HEK293 (cell line): ENCODE measurements at regions of chr6 and their contacts with region 1.

Region 1: GRCh38 chr6:150600301-150601017 is 774 bp downstream of the PLEKHG1 start:
- H3K4me3 ChIP-seq: peak overlapping the region; percentile 72
- H3K27ac ChIP-seq: peak overlapping the region; percentile 90
- H3K4me1 ChIP-seq: peaks cover 7% of the 10 kb centered on the region
- CTCF ChIP-seq: peak; percentile 65

Region 2: DNA sequence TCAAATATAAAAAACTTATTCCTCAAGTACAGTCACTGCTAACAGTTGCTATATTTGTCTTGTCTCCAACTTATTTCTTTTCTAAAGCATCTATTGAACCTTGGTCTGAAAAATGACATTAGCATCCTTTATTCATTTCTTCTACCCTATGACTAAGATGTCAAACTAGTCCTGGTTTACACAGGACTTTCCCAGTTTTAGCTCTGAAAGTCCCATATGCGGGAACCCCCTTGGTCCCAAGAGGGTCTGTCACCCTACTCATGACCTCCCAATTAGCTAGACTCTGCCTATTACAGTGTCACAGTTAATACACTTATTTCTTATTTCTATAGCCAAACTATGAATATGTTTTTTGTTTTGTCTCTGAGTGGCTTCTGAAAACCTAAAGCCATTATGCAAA is 36.3 kb after region 1 on chr6:
- CTCF ChIA-PET with region 1: interaction called, 11 read pairs
- POLR2A ChIA-PET with region 1: interaction called, 4 read pairs
- H3K4me3 ChIP-seq: no peak overlapping the region
- H3K27ac ChIP-seq: no peak overlapping the region
- H3K4me1 ChIP-seq: peaks cover 51% of the 10 kb centered on the region
- CTCF ChIP-seq: no peak

Region 3: DNA sequence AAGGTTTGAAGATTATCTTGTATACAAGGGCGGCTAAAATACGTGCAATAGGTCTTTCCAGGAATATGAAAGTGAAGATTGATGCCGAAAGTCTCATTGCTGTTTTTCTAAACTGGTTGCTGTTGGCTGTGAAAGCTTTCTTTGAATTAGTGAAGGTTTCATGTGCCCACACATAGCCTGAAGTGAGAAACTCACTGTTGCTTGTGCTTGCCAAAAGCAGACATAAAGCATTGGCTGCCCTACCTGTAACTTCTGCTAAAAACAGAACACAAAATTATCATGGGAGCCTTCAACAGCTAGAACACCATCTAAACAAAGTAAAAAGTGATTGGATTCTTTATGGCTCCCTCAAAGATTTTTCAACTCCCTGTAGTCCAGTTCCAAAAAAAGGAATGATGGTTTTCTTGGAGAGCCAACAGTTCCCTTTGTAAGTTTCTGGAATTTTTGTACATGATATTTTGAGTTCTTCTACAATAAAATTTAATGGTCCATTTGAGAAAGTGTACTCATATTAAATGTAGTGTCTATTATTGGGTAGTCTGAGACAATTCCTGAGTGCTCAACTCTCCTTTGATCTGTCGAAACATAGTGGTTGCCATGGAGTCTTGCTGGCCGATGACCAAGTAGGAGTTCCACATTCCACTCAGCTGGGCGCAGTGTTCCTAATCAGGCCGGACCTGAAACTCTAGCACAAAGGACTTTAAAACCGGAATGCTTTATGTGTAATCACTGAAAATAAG is 67.7 kb after region 1 on chr6:
- CTCF ChIA-PET with region 1: interaction called, 10 read pairs
- POLR2A ChIA-PET with region 1: interaction called, 3 read pairs
- H3K4me3 ChIP-seq: no peak overlapping the region
- H3K27ac ChIP-seq: peak overlapping the region; percentile 20; the same call in 1 of the 2 replicates
- H3K4me1 ChIP-seq: peaks cover 23% of the 10 kb centered on the region
- CTCF ChIP-seq: no peak; the same call in 1 of the 2 replicates

Region 4: GRCh38 chr6:150841697-150842096 is 241.2 kb after region 1 on chr6:
- CTCF ChIA-PET with region 1: no interaction called
- POLR2A ChIA-PET with region 1: no interaction called
- H3K4me3 ChIP-seq: no peak overlapping the region
- H3K27ac ChIP-seq: no peak overlapping the region
- H3K4me1 ChIP-seq: 0 out of 2 replicates have a peak, but pooled peaks cover 2% of the 10 kb centered on the region
- CTCF ChIP-seq: no peak